A673 (cell line): ENCODE measurements at regions of chr1 and their contacts with region 1.

Region 1: GRCh38 chr1:161389691-161390558 is 22.2 kb upstream of the CFAP126 start:
- DNase-seq: peak; percentile 96
- H3K4me3 ChIP-seq: peak overlapping the region; percentile 65
- H3K27ac ChIP-seq: peak overlapping the region; percentile 82
- H3K4me1 ChIP-seq: peaks cover 6% of the 10 kb centered on the region
- H3K27me3 ChIP-seq: no peaks in the 10 kb centered on the region
- CTCF ChIP-seq: no peak

Region 2: GRCh38 chr1:160768295-160768657 is 621.6 kb before region 1 on chr1:
- CTCF ChIA-PET with region 1: no interaction called
- POLR2A ChIA-PET with region 1: interaction called, 12 read pairs
- intact Hi-C with region 1: no loop called
- DNase-seq: peak; percentile 48
- H3K4me3 ChIP-seq: no peak overlapping the region
- H3K27ac ChIP-seq: no peak overlapping the region
- H3K4me1 ChIP-seq: no peaks in the 10 kb centered on the region
- H3K27me3 ChIP-seq: peaks cover 18% of the 10 kb centered on the region
- CTCF ChIP-seq: peak; percentile 58